ENCODE measurements at regions of chr3 and their contacts with region 1.

Region 1: DNA sequence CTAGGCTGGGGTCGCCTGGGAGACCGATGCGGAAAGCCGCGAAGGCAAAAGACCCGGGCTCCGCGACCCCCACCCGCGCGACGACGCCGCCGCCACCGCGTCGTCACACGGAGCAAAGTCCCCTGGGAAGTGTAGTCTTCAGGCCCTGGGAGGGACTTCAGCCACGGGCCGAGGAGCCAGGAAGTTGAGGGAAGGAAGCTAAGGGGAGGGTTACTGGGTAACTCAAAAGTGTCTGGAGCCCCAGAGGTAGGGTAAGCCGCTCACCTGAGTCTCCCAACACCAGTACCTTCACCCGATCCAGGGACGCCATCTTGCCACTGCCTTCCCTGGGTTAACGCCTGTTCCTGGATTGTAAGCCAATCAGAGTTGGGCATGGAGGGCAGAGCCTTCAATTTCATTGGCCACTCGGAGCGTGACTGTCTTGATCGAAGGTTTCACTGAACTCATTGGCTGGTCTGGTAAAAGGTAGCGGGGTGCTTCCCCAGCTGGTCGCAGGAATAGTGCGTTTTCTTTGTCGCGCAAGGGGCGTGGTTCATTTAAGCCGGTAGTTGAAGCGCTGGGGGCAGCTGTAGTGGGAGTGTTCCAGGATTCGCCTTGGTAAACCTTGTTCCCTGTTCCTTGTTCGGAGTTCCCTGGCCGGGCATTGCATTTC is at the starts of genes GTF2E1 and RABL3:
- DNase-seq: peak; percentile 99
- ATAC-seq: peak; percentile 99
- H3K4me3 ChIP-seq: peak within 1 kb of the TSS; percentile 100
- H3K27ac ChIP-seq: peak within 1 kb of the TSS; percentile 100
- H3K4me1 ChIP-seq: no peaks in the 10 kb centered on the region
- H3K27me3 ChIP-seq: no peaks in the 10 kb centered on the region
- CTCF ChIP-seq: no peak
- EP300 ChIP-seq: 0 out of 4 replicates have a peak, but pooled peaks of 1 of the 2 experiments have one; percentile 14
- POLR2A ChIP-seq: peak; percentile 91
- RAD21 ChIP-seq: no peak
- polyA plus RNA-seq, gene GTF2E1: 9.2 to 17.6 TPM
- polyA plus RNA-seq, gene RABL3: 28.1 to 30.3 TPM

Region 2: DNA sequence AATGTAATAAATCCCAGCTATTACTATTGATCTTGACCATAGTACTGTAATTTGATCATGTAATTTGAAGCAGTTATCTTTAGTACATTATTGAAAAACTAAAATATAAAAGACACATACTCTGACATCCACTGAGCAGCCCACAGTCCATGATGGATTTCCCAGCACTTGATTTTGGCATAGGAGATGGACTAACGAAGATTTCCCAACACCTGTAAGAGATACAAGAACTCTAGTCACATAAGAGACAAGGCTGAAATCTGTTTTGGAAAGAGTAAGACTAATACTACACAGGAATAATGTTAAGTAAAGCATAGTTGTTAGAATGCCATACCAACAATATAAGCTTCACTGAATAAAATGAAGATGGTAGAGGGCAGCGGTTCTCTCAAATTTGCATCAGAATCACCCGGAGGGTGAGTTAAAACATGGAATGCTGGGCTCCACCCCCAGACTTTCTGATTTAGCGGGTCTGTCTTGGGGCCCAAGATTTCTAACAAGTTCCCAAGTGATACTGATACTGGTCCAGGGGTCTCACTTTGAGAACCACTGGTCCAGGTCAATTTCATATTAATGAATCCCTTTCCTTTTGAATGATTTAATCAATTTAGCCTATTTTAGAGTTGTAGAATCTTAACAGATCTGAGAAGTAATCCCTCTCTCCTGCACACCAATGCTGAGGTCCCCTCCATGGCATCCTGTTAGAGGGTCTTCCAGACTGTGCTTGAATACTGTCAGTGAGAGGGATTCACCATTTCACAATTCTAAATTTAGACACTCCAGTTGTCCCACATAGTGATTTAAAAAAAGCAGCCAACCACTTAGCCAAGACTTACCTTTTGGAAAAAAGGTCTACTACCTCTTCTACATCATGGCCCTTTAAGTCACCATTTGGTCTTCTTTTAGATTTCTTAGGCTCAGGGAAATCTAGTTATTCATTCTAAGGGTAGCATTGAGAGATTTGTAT is 11.5 kb before region 1 on chr3:
- CTCF ChIA-PET with region 1: interaction called, 6 read pairs
- POLR2A ChIA-PET with region 1: no interaction called
- RAD21 ChIA-PET with region 1: interaction called, 3 read pairs
- SMC1A ChIA-PET with region 1: interaction called, 22 read pairs
- in situ Hi-C with region 1: no loop called
- intact Hi-C with region 1: no loop called
- DNase-seq: no peak
- ATAC-seq: no peak
- H3K4me3 ChIP-seq: no peak overlapping the region
- H3K27ac ChIP-seq: no peak overlapping the region
- H3K4me1 ChIP-seq: no peaks in the 10 kb centered on the region
- H3K27me3 ChIP-seq: no peaks in the 10 kb centered on the region
- CTCF ChIP-seq: no peak
- EP300 ChIP-seq: no peak
- POLR2A ChIP-seq: no peak
- RAD21 ChIP-seq: no peak

Region 3: DNA sequence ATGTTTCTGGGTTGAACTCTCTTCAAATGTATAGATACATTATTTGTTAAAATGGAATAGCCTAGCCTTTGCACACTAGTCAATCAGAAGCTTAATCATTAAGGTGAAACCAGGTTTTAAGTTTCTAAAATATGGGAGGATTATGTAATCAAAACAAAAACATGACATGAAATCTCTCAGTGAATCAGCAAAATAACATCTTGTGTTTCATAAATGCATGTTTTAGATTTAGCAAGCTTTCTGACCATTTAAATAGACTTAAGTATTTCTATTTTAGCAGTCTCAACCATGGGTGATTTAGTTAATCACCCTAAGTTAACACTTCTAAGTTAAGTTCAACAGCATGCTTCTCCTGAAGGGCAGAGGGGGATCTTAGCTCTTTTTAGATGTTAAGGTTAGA is 11.5 kb after region 1 on chr3:
- CTCF ChIA-PET with region 1: interaction called, 3 read pairs
- POLR2A ChIA-PET with region 1: interaction called, 13 read pairs
- RAD21 ChIA-PET with region 1: interaction called, 3 read pairs
- SMC1A ChIA-PET with region 1: interaction called, 12 read pairs
- in situ Hi-C with region 1: no loop called
- intact Hi-C with region 1: no loop called
- DNase-seq: no peak
- ATAC-seq: no peak; the same call in 2 of the 3 replicates
- H3K4me3 ChIP-seq: 0 out of 2 replicates have a peak overlapping the region, but pooled peaks have one; percentile 7
- H3K27ac ChIP-seq: no peak overlapping the region
- H3K4me1 ChIP-seq: no peaks in the 10 kb centered on the region
- H3K27me3 ChIP-seq: no peaks in the 10 kb centered on the region
- CTCF ChIP-seq: no peak
- EP300 ChIP-seq: no peak
- POLR2A ChIP-seq: no peak
- RAD21 ChIP-seq: no peak

Region 4: GRCh38 chr3:120763601-120764000 is 21.3 kb after region 1 on chr3:
- CTCF ChIA-PET with region 1: interaction called, 9 read pairs
- POLR2A ChIA-PET with region 1: interaction called, 4 read pairs
- RAD21 ChIA-PET with region 1: interaction called, 30 read pairs
- SMC1A ChIA-PET with region 1: interaction called, 14 read pairs
- in situ Hi-C with region 1: no loop called
- intact Hi-C with region 1: loop called (anchors 2 kb)
- DNase-seq: no peak
- ATAC-seq: peak; percentile 92
- H3K4me3 ChIP-seq: peak overlapping the region; percentile 31; the same call in 1 of the 2 replicates
- H3K27ac ChIP-seq: peak overlapping the region; percentile 65
- H3K4me1 ChIP-seq: peaks cover 18% of the 10 kb centered on the region
- H3K27me3 ChIP-seq: no peaks in the 10 kb centered on the region
- CTCF ChIP-seq: no peak
- EP300 ChIP-seq: no peak
- POLR2A ChIP-seq: no peak
- RAD21 ChIP-seq: no peak

Region 5: DNA sequence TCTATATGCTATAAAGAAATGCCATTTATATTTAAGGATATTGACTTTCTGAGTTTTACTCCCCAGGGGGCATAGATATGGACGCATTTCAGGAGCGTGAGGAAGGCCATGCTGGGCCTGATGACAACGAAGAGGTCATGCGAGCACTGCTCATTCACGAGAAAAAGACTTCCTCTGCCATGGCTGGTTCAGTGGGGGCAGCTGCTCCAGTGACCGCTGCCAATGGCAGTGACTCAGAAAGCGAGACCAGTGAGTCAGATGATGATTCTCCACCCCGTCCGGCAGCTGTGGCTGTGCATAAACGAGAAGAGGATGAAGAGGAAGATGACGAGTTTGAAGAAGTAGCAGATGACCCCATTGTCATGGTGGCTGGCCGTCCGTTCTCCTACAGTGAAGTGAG is 38.7 kb after region 1 on chr3:
- CTCF ChIA-PET with region 1: no interaction called
- POLR2A ChIA-PET with region 1: interaction called, 3 read pairs
- RAD21 ChIA-PET with region 1: no interaction called
- SMC1A ChIA-PET with region 1: interaction called, 13 read pairs
- in situ Hi-C with region 1: no loop called
- intact Hi-C with region 1: loop called (anchors 1 kb)
- DNase-seq: peak; percentile 62
- ATAC-seq: peak; percentile 98
- H3K4me3 ChIP-seq: no peak overlapping the region
- H3K27ac ChIP-seq: peak overlapping the region; percentile 7; the same call in 1 of the 2 replicates
- H3K4me1 ChIP-seq: peaks cover 11% of the 10 kb centered on the region
- H3K27me3 ChIP-seq: no peaks in the 10 kb centered on the region
- CTCF ChIP-seq: no peak
- EP300 ChIP-seq: peak; percentile 83 to 87
- POLR2A ChIP-seq: no peak
- RAD21 ChIP-seq: no peak

Region 6: DNA sequence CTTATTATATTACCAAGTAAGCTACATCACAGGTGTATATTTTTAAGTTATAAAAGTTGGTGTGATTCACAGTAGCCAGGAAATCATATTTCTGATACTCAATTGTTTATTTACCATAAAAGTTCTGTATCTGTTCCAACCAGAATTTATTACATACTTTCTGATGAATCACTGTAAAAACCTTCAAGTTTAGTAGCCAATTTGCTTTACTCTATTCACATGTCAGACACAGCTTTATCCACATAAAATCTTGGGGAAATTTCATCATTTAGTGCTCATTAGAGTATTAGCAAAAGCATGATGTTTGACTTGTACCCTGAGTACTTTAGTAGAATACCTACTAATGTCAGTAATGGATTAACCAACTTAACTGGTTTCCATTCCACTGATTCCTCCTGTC is 553.6 kb after region 1 on chr3:
- CTCF ChIA-PET with region 1: no interaction called
- POLR2A ChIA-PET with region 1: no interaction called
- RAD21 ChIA-PET with region 1: no interaction called
- SMC1A ChIA-PET with region 1: no interaction called
- in situ Hi-C with region 1: no loop called
- intact Hi-C with region 1: no loop called
- DNase-seq: no peak
- ATAC-seq: no peak
- H3K4me3 ChIP-seq: no peak overlapping the region
- H3K27ac ChIP-seq: no peak overlapping the region
- H3K4me1 ChIP-seq: no peaks in the 10 kb centered on the region
- H3K27me3 ChIP-seq: no peaks in the 10 kb centered on the region
- CTCF ChIP-seq: no peak
- EP300 ChIP-seq: no peak
- POLR2A ChIP-seq: no peak
- RAD21 ChIP-seq: no peak